H1 (cell line): ENCODE measurements at regions of chr6 and their contacts with region 1.

Region 1: GRCh38 chr6:42142118-42142931 is at the start of gene C6orf132:
- DNase-seq: peak; percentile 46 to 86
- H3K4me3 ChIP-seq: peak within 1 kb of the TSS; percentile 78 to 94 (median 90)
- H3K27ac ChIP-seq: peak within 1 kb of the TSS; percentile 80
- H3K4me1 ChIP-seq: peaks cover 17 to 32% (median 30%) of the 10 kb centered on the region in 4 experiments
- H3K27me3 ChIP-seq: no peaks in the 10 kb centered on the region
- CTCF ChIP-seq: no peak
- EP300 ChIP-seq: 0 out of 3 replicates have a peak, but pooled peaks of 1 of the 2 experiments have one; percentile 62
- POLR2A ChIP-seq: peak in 1 of 2 experiments; percentile 81; a peak in 2 of 3 replicates
- RAD21 ChIP-seq: no peak
- total RNA-seq, gene C6orf132: 62.2 and 64.0 TPM in 2 replicates

Region 2: GRCh38 chr6:42110683-42111082 is 31.6 kb before region 1 on chr6:
- CTCF ChIA-PET with region 1: interaction called, 22 read pairs
- POLR2A ChIA-PET with region 1: interaction called, 50 read pairs
- DNase-seq: no peak
- H3K4me3 ChIP-seq: no peak overlapping the region
- H3K27ac ChIP-seq: no peak overlapping the region
- H3K4me1 ChIP-seq: no peaks in the 10 kb centered on the region; a peak in 1 of 7 replicates
- H3K27me3 ChIP-seq: no peaks in the 10 kb centered on the region
- CTCF ChIP-seq: no peak
- EP300 ChIP-seq: no peak
- POLR2A ChIP-seq: no peak
- RAD21 ChIP-seq: no peak

Region 3: GRCh38 chr6:42158011-42158410 is 15.7 kb after region 1 on chr6:
- CTCF ChIA-PET with region 1: interaction called, 123 read pairs
- POLR2A ChIA-PET with region 1: interaction called, 109 read pairs
- DNase-seq: no peak
- H3K4me3 ChIP-seq: no peak overlapping the region
- H3K27ac ChIP-seq: no peak overlapping the region
- H3K4me1 ChIP-seq: peaks cover 0 to 14% (median 8%) of the 10 kb centered on the region in 4 experiments
- H3K27me3 ChIP-seq: peaks cover 0 to 3% (median 0%) of the 10 kb centered on the region in 4 experiments; a peak in 3 of 7 replicates
- CTCF ChIP-seq: no peak
- EP300 ChIP-seq: no peak
- POLR2A ChIP-seq: no peak
- RAD21 ChIP-seq: no peak

Region 4: DNA sequence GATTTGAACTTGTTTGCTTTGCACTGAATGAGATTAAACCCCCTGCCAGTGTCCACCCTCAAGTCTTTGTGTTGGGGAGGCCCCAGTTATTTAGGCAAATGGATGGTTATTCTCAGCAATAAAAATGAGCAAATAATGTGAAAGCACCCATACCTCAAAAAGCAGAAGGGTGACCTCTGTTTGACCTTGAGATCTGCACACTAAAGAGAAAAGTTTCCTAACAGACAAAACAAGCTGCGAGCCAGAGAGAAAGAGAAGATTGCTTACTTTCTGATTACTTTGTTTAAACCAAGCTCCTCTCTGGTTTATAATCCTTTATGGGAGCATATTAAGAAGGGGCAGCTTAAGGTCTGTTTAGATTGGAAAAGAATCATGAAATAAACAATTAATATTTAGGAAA is 339.8 kb after region 1 on chr6:
- CTCF ChIA-PET with region 1: no interaction called
- POLR2A ChIA-PET with region 1: no interaction called
- DNase-seq: no peak
- H3K4me3 ChIP-seq: no peak overlapping the region
- H3K27ac ChIP-seq: no peak overlapping the region
- H3K4me1 ChIP-seq: no peaks in the 10 kb centered on the region
- H3K27me3 ChIP-seq: no peaks in the 10 kb centered on the region
- CTCF ChIP-seq: no peak
- EP300 ChIP-seq: no peak
- POLR2A ChIP-seq: no peak
- RAD21 ChIP-seq: no peak